Motor neuron (in vitro differentiated cells): ENCODE measurements at regions of chr1 and their contacts with region 1.

Region 1: DNA sequence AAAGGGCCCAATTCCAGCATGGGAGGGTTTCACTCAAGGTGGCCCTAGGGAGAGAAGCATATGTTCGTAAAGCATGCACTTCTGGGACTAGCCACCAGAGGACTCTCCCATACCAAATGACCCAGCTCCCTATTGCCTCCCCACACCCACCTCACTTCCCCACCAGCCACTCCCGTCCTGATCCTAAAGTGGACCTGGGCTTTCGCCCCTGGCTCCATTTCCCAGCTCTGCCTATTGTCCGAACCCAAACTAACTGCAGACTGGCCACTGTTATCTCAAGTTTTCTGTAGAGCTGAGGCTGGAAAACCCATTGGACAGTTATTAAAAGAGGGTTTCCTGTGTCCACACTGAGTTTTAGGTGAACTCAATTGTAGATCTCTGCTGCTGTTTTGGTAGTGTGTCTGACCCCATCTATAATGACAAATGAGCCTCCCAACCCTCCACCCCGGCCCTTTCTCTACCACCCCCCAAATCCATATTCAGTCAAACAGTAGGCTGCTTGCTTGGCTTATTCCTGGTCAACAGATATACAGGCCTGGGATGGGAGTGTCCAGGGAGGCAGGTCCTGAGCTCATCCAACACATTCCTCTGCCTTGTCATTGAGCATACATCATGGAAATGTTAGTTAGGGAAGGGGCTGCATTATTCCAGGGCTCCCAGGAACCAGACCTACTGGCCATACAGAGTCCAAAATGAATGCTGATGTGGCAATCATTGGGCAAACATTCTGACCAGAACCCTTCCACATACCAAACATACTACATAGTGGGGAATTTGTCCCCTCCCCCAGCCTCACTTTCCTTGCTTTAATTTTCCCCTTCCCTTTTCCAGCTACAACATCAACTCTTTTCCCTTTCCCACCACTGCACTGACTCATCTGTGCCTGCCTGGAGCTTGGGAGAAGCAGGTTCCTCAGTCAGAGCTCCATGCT is 59.2 kb downstream of the ABCA4 start:
- ATAC-seq: peak; percentile 70 to 96 (median 85)
- H3K4me3 ChIP-seq: no peak overlapping the region
- H3K27ac ChIP-seq: no peak overlapping the region
- H3K4me1 ChIP-seq: no peaks in the 10 kb centered on the region

Region 2: GRCh38 chr1:93944656-93945055 is 117.1 kb before region 1 on chr1:
- in situ Hi-C with region 1: no loop called
- ATAC-seq: no peak
- H3K4me3 ChIP-seq: no peak overlapping the region
- H3K27ac ChIP-seq: no peak overlapping the region
- H3K4me1 ChIP-seq: no peaks in the 10 kb centered on the region

Region 3: GRCh38 chr1:94160811-94161210 is 99.0 kb after region 1 on chr1:
- in situ Hi-C with region 1: loop called in 1 of 9 experiments (anchors 25 kb)
- ATAC-seq: peak; percentile 67 to 98 (median 88)
- H3K4me3 ChIP-seq: no peak overlapping the region
- H3K27ac ChIP-seq: no peak overlapping the region
- H3K4me1 ChIP-seq: peaks cover 0 to 3% of the 10 kb centered on the region in 2 donors

Region 4: DNA sequence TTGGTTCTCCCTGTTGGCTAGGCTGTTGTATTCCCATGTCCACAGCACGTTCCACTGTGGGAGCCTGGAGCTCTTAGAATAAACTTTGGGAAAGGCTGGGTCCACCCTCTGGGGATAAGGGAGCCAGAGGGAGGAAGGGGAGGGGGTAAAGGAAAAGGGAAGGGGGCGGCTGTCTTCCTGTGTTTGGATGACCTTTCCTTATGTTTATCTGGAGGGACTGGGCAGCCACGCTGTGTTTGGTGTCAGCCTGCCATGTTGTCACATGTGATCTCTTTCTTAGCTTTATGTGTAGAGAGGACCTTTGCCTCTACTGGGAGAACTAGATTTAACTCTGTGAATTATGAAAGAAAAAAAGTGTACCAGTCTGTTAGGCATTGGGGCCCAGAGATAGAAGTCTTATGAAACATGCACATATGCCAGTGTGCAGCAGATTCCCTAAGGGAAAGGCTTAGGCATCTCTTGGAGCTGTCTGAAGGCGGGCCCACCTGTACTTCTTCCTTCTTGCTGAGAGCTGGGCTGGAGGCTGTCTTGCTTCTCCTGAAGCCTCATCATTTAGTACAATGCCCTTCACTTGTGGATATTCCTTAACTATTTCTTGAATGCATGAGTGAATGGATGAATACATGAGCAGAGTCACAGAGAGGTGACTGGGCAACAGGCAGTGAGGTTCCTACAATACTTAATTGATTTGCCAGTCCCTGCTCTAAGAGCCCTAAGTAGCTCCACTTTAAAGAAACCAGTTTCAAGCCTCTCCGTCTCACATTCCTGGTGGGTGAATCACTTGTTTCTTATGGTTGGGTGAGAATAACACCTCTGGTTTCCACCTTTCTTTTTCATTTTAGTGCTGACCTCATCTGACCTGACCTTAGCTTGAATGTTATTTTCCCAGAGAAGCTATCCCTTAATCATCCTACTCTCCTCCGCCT is 238.1 kb after region 1 on chr1:
- in situ Hi-C with region 1: loop called in 1 of 9 experiments (anchors 25 kb)
- ATAC-seq: peak in 3 of 8 experiments; percentile 43 to 65 (median 53)
- H3K4me3 ChIP-seq: no peak overlapping the region
- H3K27ac ChIP-seq: no peak overlapping the region
- H3K4me1 ChIP-seq: no peaks in the 10 kb centered on the region

Region 5: DNA sequence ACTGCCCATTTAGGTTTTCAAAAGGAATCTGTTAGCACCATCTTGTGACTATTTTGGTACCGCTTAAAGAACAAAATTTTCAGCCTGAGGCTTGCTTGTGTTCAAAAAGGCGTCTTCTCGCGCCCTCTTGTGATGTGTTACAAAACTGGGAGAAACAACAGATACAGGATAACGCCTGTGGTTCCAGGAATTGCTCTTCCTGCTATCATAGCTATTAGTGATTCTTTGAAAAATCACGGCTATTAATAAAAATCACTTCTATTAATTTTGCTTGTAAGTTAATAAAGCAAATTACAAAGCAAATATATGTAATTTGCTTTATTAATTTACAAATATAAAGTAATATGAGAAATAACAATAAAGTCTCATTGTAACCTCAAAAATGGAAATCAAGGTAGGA is 274.2 kb after region 1 on chr1:
- in situ Hi-C with region 1: loop called in 4 of 9 experiments (anchors 5 to 25 kb)
- ATAC-seq: peak; percentile 82 to 93 (median 91)
- H3K4me3 ChIP-seq: no peak overlapping the region
- H3K27ac ChIP-seq: no peak overlapping the region
- H3K4me1 ChIP-seq: no peaks in the 10 kb centered on the region

Region 6: GRCh38 chr1:94801919-94802546 is 740.3 kb after region 1 on chr1:
- in situ Hi-C with region 1: loop called in 1 of 9 experiments (anchors 25 kb)
- ATAC-seq: peak; percentile 44 to 94 (median 64)
- H3K4me3 ChIP-seq: no peak overlapping the region
- H3K27ac ChIP-seq: no peak overlapping the region
- H3K4me1 ChIP-seq: peaks cover 14 to 20% of the 10 kb centered on the region in 2 donors